Activated CD8-positive, alpha-beta T cell treated with anti-CD3 and anti-CD28 coated beads for 36 hours (primary cell): ENCODE measurements at regions of chr3 and their contacts with region 1.

Region 1: DNA sequence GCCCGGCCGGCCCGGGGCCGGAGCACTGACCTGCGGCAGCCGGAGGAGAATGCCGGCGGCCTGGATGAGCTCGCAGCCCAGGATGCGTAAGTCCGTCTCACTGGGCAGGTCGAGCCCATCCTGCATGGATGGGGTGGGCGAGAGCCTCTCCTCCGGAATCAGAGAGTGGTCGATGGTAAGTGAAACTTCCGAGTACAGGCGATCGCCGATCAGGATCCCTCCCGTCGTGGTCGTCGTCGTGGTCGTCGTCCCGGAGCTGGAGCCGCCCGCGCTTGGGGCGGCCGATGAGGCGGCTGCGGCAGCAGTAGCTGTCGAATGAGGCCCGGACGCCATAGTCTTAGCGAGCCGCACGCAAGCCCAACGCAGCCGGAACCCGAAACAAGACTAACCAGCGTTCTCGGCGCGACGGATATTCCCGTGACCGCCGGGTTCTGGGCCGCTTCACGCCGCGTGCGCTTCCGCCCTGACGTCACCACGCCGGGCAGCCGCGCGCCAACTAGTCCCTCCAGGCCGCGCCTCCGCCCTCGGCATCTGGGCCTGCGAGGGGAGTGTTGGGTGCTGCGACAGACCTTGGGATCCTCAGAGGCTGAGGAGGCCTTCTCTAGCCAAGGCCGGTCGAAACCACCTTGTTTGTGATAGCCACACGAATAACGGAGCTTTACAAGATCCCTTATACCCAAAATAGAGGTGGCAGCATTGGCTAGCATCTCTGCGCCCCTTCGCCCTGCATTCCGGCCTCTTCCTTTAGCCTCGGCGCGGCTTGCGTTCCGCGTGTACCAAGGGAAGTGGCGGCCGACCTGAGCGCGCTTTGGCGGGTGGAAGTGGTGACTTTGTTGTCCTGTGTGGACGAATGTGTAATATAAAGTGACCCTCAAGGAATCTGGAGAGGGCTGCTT is at the start of gene CCNL1:
- DNase-seq: peak; percentile 96
- ATAC-seq: peak; percentile 79
- H3K4me3 Mint-ChIP-seq: peak within 1 kb of the TSS; percentile 97
- H3K27ac Mint-ChIP-seq: peak within 1 kb of the TSS; percentile 99
- H3K4me1 Mint-ChIP-seq: peaks cover 45% of the 10 kb centered on the region
- H3K27me3 Mint-ChIP-seq: no peaks in the 10 kb centered on the region
- CTCF ChIP-seq: no peak
- total RNA-seq, gene CCNL1: 180 to 191 TPM

Region 2: DNA sequence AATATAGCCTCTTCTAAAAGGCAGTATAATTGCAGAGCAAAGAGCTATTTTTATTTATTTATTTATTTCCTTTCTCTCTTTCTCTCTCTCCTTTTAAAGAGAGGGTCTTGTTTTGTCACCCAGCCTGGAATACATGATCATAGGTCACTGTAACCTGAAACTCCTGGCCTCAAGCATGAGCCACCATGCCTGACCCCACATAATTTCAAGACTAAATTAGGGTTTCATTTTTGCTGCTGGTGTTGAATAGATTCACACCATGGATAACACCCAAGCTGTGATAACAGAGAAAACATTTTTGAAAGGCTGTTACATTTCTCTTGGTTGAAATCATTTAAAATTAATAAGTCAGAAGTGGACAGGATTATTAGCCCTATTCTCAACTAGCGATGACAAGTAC is 202.3 kb before region 1 on chr3:
- CTCF ChIA-PET with region 1: no interaction called
- POLR2A ChIA-PET with region 1: no interaction called
- intact Hi-C with region 1: no loop called
- DNase-seq: no peak
- ATAC-seq: no peak
- H3K4me3 Mint-ChIP-seq: no peak overlapping the region
- H3K27ac Mint-ChIP-seq: no peak overlapping the region
- H3K4me1 Mint-ChIP-seq: no peaks in the 10 kb centered on the region
- H3K27me3 Mint-ChIP-seq: peaks cover 5% of the 10 kb centered on the region
- CTCF ChIP-seq: no peak

Region 3: DNA sequence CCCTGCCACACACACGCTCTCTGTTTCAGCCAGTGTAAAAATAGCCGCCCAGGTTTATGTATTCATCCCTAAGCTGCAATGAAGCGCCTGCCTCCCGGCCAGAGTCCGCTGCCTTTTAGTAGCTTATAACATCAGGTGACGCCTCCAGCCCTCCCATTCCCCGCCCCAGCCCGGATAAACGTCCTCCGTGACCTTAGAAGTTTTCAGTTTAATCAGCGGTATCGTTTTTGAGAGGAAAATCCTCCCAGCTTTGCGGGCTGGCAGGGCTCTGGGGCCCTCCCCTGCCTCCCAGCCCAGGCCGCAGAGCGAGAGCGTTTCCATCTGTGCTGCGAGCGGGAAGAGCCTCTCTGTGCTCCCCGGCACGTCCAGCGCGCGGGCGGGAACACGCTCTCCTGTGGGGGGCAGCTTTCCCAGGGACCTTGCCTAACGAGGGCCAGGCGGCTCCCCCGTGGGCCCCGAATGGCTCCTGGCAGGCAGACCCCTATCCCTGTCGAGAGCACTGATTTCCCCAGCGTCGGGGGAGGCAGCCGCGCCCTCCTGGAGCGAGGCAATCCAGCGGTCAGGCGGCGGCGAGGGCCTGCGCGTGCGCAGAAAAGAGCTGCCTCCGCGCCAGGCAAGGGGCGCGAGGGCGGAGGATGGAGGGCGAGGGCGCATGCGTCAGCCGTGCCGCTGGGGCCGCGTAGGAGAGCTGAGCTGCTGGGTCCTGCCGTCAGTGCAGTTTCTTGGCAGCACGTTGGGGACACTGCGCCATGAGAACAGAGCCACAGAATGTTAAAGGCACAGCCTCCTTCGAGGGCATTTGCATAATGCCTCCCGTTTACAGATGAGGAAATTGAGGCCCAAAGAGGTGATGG is 71.2 kb before region 1 on chr3:
- CTCF ChIA-PET with region 1: interaction called, 4 read pairs
- POLR2A ChIA-PET with region 1: interaction called, 29 read pairs
- intact Hi-C with region 1: no loop called
- DNase-seq: peak; percentile 97
- ATAC-seq: peak; percentile 86
- H3K4me3 Mint-ChIP-seq: peak overlapping the region; percentile 74
- H3K27ac Mint-ChIP-seq: peak overlapping the region; percentile 96
- H3K4me1 Mint-ChIP-seq: peaks cover 64% of the 10 kb centered on the region
- H3K27me3 Mint-ChIP-seq: no peaks in the 10 kb centered on the region
- CTCF ChIP-seq: no peak

Region 4: DNA sequence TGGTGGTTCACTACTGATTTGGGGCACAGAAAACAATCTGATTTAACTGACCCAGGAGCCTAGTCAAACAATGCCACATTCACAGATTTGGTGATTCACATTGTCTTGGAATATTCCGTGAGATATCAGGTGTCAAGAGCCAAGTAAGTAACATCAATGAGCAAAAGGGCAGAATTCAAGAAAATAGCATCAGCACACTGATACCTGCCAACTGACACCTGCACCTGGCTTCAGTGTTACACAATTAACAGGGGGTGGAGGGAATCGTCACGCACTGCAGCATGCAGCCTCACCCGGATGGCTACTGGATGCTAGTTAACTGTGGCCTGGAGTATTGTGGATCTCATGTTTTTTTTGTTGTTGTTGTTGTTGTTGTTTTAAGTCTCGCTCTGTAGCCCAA is 17.7 kb before region 1 on chr3:
- CTCF ChIA-PET with region 1: interaction called, 25 read pairs
- POLR2A ChIA-PET with region 1: interaction called, 106 read pairs
- intact Hi-C with region 1: no loop called
- DNase-seq: no peak
- ATAC-seq: no peak
- H3K4me3 Mint-ChIP-seq: no peak overlapping the region
- H3K27ac Mint-ChIP-seq: peak overlapping the region; percentile 26
- H3K4me1 Mint-ChIP-seq: peaks cover 7% of the 10 kb centered on the region
- H3K27me3 Mint-ChIP-seq: no peaks in the 10 kb centered on the region
- CTCF ChIP-seq: no peak

Region 5: DNA sequence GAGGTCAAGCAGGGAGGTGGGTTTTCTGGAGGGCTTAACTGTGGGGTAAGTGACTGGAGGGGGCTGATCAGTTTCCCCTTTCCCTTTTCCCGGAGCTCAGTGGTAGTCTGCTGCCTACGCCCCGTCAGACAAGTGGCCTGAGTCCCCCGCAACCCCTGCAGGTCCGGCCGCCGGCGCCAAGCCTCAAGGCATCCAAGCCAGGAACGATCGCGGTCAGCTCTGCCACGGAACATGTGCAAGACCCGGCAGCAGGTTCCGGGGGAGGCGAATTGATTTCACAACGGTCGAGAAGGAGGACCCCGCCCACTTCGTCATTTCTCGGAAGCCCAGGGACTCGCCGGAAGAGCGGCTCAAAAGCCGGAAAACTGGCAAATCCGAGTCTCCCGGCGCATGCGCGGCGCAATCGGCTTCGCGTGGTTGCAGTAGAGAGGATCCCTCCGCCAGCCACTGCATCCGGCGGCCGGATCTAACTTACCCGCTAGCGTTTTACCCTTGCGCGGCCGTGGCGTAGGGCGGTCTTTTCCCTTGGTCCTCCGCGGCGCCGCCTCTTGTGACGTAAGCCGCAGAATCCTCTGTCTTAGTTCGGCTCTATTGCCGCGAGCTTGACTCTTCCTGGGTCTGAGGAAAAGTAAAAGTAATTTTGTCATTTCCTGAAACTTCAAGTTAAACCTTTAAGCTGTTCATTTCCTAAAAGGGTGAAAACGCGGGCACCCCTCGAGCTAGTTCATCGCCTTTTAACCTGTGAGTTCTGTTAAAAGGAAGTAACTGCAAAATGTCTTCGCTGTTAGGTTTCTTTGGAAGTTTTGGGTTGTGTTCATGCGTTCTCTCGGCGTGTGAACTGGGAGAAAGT is 14.9 kb after region 1 on chr3:
- CTCF ChIA-PET with region 1: interaction called, 47 read pairs
- POLR2A ChIA-PET with region 1: interaction called, 403 read pairs
- intact Hi-C with region 1: loop called (anchors 1 kb)
- DNase-seq: peak; percentile 99
- ATAC-seq: peak; percentile 97
- H3K4me3 Mint-ChIP-seq: peak overlapping the region; percentile 84
- H3K27ac Mint-ChIP-seq: peak overlapping the region; percentile 92
- H3K4me1 Mint-ChIP-seq: peaks cover 29% of the 10 kb centered on the region
- H3K27me3 Mint-ChIP-seq: no peaks in the 10 kb centered on the region
- CTCF ChIP-seq: no peak

Region 6: GRCh38 chr3:157239082-157239704 is 79.2 kb after region 1 on chr3:
- CTCF ChIA-PET with region 1: interaction called, 5 read pairs
- POLR2A ChIA-PET with region 1: interaction called, 18 read pairs
- intact Hi-C with region 1: loop called (anchors 5 kb)
- DNase-seq: peak; percentile 89
- ATAC-seq: peak; percentile 100
- H3K4me3 Mint-ChIP-seq: no peak overlapping the region
- H3K27ac Mint-ChIP-seq: no peak overlapping the region
- H3K4me1 Mint-ChIP-seq: peaks cover 5% of the 10 kb centered on the region
- H3K27me3 Mint-ChIP-seq: no peaks in the 10 kb centered on the region
- CTCF ChIP-seq: peak; percentile 87